HEK293 (cell line): ENCODE measurements at regions of chrX and their contacts with region 1.

Region 1: GRCh38 chrX:154308108-154308946 is 12.7 kb downstream of the TKTL1 start:
- H3K4me3 ChIP-seq: no peak overlapping the region
- H3K27ac ChIP-seq: no peak overlapping the region
- H3K4me1 ChIP-seq: no peaks in the 10 kb centered on the region
- CTCF ChIP-seq: peak; percentile 52; the same call in 1 of the 2 replicates

Region 2: DNA sequence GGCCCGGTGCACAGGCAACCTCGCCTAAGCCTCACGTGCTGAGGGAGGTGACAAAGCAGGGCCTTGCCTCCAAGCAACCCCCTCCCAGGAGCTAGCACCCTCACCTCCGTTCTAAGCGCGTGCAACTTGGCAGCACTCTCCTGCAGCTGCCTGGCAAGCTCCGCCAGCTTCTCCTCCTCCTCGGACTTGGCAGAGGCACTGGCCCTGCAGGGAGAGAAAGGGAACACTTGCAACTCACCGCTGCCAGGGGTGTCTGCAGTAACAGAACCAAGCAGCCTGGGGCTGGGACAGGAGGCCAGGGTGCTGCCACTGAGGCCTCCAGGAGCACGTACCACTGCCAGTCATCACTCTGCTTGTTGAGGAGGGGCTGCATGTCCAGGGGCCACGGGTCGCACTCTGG is 852.2 kb before region 1 on chrX:
- CTCF ChIA-PET with region 1: no interaction called
- POLR2A ChIA-PET with region 1: no interaction called
- H3K4me3 ChIP-seq: no peak overlapping the region
- H3K27ac ChIP-seq: no peak overlapping the region
- H3K4me1 ChIP-seq: no peaks in the 10 kb centered on the region
- CTCF ChIP-seq: no peak

Region 3: DNA sequence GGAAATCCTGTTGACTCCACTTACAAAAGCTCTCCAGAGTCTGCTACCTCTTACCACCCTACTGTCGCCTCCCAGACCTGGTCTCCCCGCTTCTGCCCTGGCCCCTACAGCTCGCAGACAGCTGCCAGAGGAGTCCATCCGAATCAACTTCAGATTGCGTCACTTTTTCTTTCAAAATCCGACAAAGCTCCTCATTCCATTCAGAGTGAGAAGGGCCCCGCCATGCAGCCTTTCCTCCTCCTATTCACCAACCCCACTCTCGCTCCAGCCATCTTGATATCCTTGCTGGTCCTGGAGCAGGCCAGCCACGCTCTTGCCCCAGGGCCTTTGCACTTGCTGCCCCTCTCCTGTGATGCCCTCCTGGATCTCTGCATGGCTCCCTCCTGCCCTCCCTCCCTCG is 169.5 kb before region 1 on chrX:
- CTCF ChIA-PET with region 1: interaction called, 10 read pairs
- POLR2A ChIA-PET with region 1: no interaction called
- H3K4me3 ChIP-seq: no peak overlapping the region
- H3K27ac ChIP-seq: no peak overlapping the region
- H3K4me1 ChIP-seq: no peaks in the 10 kb centered on the region
- CTCF ChIP-seq: no peak

Region 4: GRCh38 chrX:154327038-154327820 is 18.9 kb after region 1 on chrX:
- CTCF ChIA-PET with region 1: interaction called, 17 read pairs
- POLR2A ChIA-PET with region 1: no interaction called
- H3K4me3 ChIP-seq: no peak overlapping the region
- H3K27ac ChIP-seq: no peak overlapping the region
- H3K4me1 ChIP-seq: peaks cover 18% of the 10 kb centered on the region
- CTCF ChIP-seq: no peak